ENCODE measurements at regions of chr16 and their contacts with region 1.

Region 1: DNA sequence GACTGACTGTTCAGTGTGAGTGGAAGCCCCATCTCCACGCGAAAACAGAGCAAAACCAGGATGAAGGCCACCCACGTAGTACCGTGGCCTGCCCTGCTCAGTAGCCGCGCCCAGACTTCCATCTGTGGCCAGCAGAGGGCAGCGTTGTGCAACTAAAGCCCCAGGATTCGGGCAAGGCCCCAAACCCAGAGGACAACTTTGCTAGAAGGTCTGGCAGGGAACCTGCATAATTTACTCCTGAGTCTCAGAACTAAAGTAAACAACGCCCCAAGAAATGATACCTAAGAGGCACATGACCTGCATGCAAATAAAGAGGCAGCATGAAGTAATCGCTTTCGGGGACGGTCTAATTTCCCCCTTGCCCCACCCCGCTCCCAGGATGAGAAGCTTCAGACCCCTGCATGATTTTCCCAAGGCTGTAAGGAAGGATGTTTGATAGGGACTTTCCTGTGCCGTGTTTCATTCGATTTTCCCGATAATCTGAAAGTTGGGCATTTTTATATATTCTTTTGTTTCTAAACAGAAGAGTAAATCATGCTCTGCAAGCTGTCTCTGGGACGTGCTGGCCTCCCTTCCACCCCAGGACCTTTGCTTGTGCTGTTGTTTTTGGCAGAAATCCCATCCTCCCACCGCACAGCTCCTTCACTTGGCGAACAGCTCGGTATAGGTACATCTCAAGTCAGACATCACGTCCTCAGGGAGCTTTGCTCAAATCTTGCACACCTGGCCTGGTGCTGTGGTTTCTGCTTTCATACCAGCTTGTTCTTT is 18.6 kb downstream of the HSBP1 start:
- DNase-seq: peak; percentile 57 to 95 (median 91)
- ATAC-seq: peak; percentile 96 to 100 (median 98)
- H3K4me3 ChIP-seq: no peak overlapping the region
- H3K27ac ChIP-seq: no peak overlapping the region
- H3K4me1 ChIP-seq: no peaks in the 10 kb centered on the region
- H3K27me3 ChIP-seq: no peaks in the 10 kb centered on the region
- CTCF ChIP-seq: peak; percentile 18 to 95 (median 93)

Region 2: GRCh38 chr16:83887081-83887480 is 60.8 kb after region 1 on chr16:
- intact Hi-C with region 1: loop called in 1 of 3 experiments (anchors 10 kb)
- DNase-seq: no peak
- ATAC-seq: no peak
- H3K4me3 ChIP-seq: no peak overlapping the region
- H3K27ac ChIP-seq: no peak overlapping the region
- H3K4me1 ChIP-seq: no peaks in the 10 kb centered on the region
- H3K27me3 ChIP-seq: no peaks in the 10 kb centered on the region
- CTCF ChIP-seq: no peak

Region 3: GRCh38 chr16:83895239-83895638 is 68.9 kb after region 1 on chr16:
- intact Hi-C with region 1: loop called in 1 of 3 experiments (anchors 2 kb)
- DNase-seq: no peak
- ATAC-seq: no peak
- H3K4me3 ChIP-seq: no peak overlapping the region
- H3K27ac ChIP-seq: no peak overlapping the region
- H3K4me1 ChIP-seq: peaks cover 0 to 7% (median 7%) of the 10 kb centered on the region in 3 donors
- H3K27me3 ChIP-seq: no peaks in the 10 kb centered on the region
- CTCF ChIP-seq: no peak

Region 4: GRCh38 chr16:83956336-83957289 is 130.3 kb after region 1 on chr16:
- intact Hi-C with region 1: no loop called
- DNase-seq: peak; percentile 67 to 93 (median 81)
- ATAC-seq: peak in 2 of 4 donors; percentile 6 to 16
- H3K4me3 ChIP-seq: no peak overlapping the region
- H3K27ac ChIP-seq: no peak overlapping the region
- H3K4me1 ChIP-seq: peaks cover 4 to 18% (median 12%) of the 10 kb centered on the region in 3 donors
- H3K27me3 ChIP-seq: no peaks in the 10 kb centered on the region
- CTCF ChIP-seq: peak; percentile 62 to 79 (median 65)

Region 5: GRCh38 chr16:84055366-84055765 is 229.0 kb after region 1 on chr16:
- intact Hi-C with region 1: loop called in 1 of 3 experiments (anchors 10 kb)
- DNase-seq: peak in 4 of 6 donors; percentile 47 to 67 (median 58)
- ATAC-seq: peak; percentile 63 to 79 (median 73)
- H3K4me3 ChIP-seq: no peak overlapping the region
- H3K27ac ChIP-seq: peak overlapping the region in 3 of 4 donors; percentile 16 to 61 (median 61)
- H3K4me1 ChIP-seq: peaks cover 6 to 8% (median 7%) of the 10 kb centered on the region in 3 donors
- H3K27me3 ChIP-seq: no peaks in the 10 kb centered on the region
- CTCF ChIP-seq: no peak

Measured in pancreas (tissue), 10 donors.